Natural killer cell (primary cell): ENCODE measurements at regions of chr17 and their contacts with region 1.

Region 1: GRCh38 chr17:40909351-40909750 is 24.3 kb upstream of the KRT20 start:
- DNase-seq: peak; percentile 23 to 84
- ATAC-seq: peak; percentile 63 to 81 (median 72)
- H3K4me3 ChIP-seq: no peak overlapping the region
- H3K4me3 Mint-ChIP-seq: no peak overlapping the region
- H3K27ac ChIP-seq: no peak overlapping the region
- H3K27ac Mint-ChIP-seq: no peak overlapping the region
- H3K4me1 ChIP-seq: no peaks in the 10 kb centered on the region
- H3K4me1 Mint-ChIP-seq: no peaks in the 10 kb centered on the region
- H3K27me3 ChIP-seq: peaks cover 12% of the 10 kb centered on the region
- H3K27me3 Mint-ChIP-seq: peaks cover 34 to 60% of the 10 kb centered on the region in 2 donors
- CTCF ChIP-seq: peak; percentile 57

Region 2: GRCh38 chr17:40632216-40632615 is 277.1 kb before region 1 on chr17:
- intact Hi-C with region 1: no loop called
- DNase-seq: no peak
- ATAC-seq: no peak
- H3K4me3 ChIP-seq: no peak overlapping the region
- H3K4me3 Mint-ChIP-seq: no peak overlapping the region
- H3K27ac ChIP-seq: no peak overlapping the region
- H3K27ac Mint-ChIP-seq: no peak overlapping the region
- H3K4me1 ChIP-seq: no peaks in the 10 kb centered on the region
- H3K4me1 Mint-ChIP-seq: no peaks in the 10 kb centered on the region
- H3K27me3 ChIP-seq: no peaks in the 10 kb centered on the region
- H3K27me3 Mint-ChIP-seq: no peaks in the 10 kb centered on the region
- CTCF ChIP-seq: no peak

Region 3: GRCh38 chr17:41322094-41322902 is 412.9 kb after region 1 on chr17:
- intact Hi-C with region 1: loop called (anchors 10 kb)
- DNase-seq: peak in 1 of 2 donors; percentile 75
- ATAC-seq: peak; percentile 51 to 76 (median 64)
- H3K4me3 ChIP-seq: no peak overlapping the region
- H3K4me3 Mint-ChIP-seq: no peak overlapping the region
- H3K27ac ChIP-seq: no peak overlapping the region
- H3K27ac Mint-ChIP-seq: no peak overlapping the region
- H3K4me1 ChIP-seq: peaks cover 21% of the 10 kb centered on the region
- H3K4me1 Mint-ChIP-seq: no peaks in the 10 kb centered on the region
- H3K27me3 ChIP-seq: no peaks in the 10 kb centered on the region
- H3K27me3 Mint-ChIP-seq: peaks cover 0 to 5% of the 10 kb centered on the region in 2 donors
- CTCF ChIP-seq: peak; percentile 75

Region 4: DNA sequence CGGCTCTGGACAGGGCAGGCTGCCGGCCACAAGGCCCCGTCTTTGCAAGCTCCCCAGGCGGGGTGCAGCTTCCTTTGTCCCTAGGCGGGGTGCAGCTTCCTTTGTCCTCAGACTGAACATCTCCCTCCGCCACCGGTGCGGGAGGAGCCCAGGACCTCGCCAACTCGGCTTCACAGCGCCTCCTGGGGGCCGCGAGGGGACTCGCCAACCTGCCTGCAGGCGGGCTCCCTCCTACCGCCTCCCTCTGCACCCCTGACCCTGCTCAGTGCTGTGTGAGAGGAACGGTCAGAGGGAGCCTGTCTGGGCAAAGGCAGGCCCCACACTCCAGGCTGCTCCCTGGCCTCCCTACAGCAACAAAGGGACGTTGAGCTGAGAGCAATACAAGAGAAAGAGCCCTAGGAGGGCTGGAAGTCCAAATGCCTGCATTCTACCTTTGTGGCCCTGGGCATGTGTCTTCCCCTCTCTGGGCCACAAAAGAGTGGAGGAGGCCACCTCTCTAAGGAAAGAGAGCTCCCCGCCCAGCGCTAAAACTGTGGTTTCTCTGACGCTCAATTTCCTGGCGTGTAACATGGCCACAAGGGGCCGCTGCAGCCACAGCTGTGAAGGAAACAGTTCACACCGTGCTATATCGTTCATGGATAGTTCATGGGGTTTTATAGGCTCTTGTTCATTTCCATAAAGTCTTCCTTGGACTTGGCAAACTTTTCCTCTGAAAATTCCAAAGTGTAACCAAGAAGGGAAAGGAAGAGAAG is 639.7 kb after region 1 on chr17:
- intact Hi-C with region 1: loop called (anchors 5 kb)
- DNase-seq: peak; percentile 83 to 91
- ATAC-seq: peak; percentile 91 to 95 (median 92)
- H3K4me3 ChIP-seq: no peak overlapping the region
- H3K4me3 Mint-ChIP-seq: peak overlapping the region; percentile 69
- H3K27ac ChIP-seq: peak overlapping the region; percentile 47
- H3K27ac Mint-ChIP-seq: peak overlapping the region; percentile 58 to 65
- H3K4me1 ChIP-seq: peaks cover 17% of the 10 kb centered on the region
- H3K4me1 Mint-ChIP-seq: peaks cover 9 to 23% of the 10 kb centered on the region in 2 donors
- H3K27me3 ChIP-seq: no peaks in the 10 kb centered on the region
- H3K27me3 Mint-ChIP-seq: peaks cover 17 to 20% of the 10 kb centered on the region in 2 donors
- CTCF ChIP-seq: peak; percentile 87

Region 5: GRCh38 chr17:41648411-41649195 is 739.3 kb after region 1 on chr17:
- intact Hi-C with region 1: loop called (anchors 1 kb)
- DNase-seq: peak; percentile 81 to 91
- ATAC-seq: peak; percentile 91 to 93 (median 92)
- H3K4me3 ChIP-seq: peak overlapping the region; percentile 30
- H3K4me3 Mint-ChIP-seq: peak overlapping the region; percentile 73
- H3K27ac ChIP-seq: no peak overlapping the region
- H3K27ac Mint-ChIP-seq: peak overlapping the region in 1 of 2 donors; percentile 41
- H3K4me1 ChIP-seq: peaks cover 14% of the 10 kb centered on the region
- H3K4me1 Mint-ChIP-seq: peaks cover 9 to 10% of the 10 kb centered on the region in 2 donors
- H3K27me3 ChIP-seq: no peaks in the 10 kb centered on the region
- H3K27me3 Mint-ChIP-seq: peaks cover 0 to 4% of the 10 kb centered on the region in 2 donors
- CTCF ChIP-seq: peak; percentile 70